ENCODE measurements at regions of chr1 and their contacts with region 1.

Region 1: DNA sequence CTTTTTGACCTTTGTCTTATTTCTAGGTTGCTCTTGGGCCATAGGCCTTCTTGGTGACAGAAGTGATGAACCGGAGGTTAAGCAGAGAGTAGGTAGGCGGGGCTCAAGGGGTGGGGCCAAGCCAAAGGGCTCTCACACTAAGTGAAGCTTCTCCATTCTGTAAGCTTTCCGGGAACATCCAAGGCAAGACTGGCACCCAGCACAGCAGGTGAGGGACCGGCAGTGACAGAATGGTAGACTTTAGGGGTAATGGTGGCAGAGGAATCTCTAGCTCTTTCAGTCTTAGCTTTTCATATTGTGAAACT is at the start of gene TNFAIP8L2:
- DNase-seq: peak; percentile 94
- H3K4me3 Mint-ChIP-seq: peak within 1 kb of the TSS; percentile 97
- H3K27ac Mint-ChIP-seq: peak within 1 kb of the TSS; percentile 96
- H3K4me1 Mint-ChIP-seq: peaks cover 42% of the 10 kb centered on the region
- H3K27me3 Mint-ChIP-seq: no peaks in the 10 kb centered on the region
- total RNA-seq, gene TNFAIP8L2: 29.4 and 32.5 TPM in 2 replicates

Region 2: GRCh38 chr1:151024540-151025146 is 131.8 kb before region 1 on chr1:
- intact Hi-C with region 1: loop called (anchors 1 kb)
- DNase-seq: peak; percentile 95
- H3K4me3 Mint-ChIP-seq: peak overlapping the region; percentile 30
- H3K27ac Mint-ChIP-seq: peak overlapping the region; percentile 59
- H3K4me1 Mint-ChIP-seq: peaks cover 7% of the 10 kb centered on the region
- H3K27me3 Mint-ChIP-seq: no peaks in the 10 kb centered on the region

Region 3: DNA sequence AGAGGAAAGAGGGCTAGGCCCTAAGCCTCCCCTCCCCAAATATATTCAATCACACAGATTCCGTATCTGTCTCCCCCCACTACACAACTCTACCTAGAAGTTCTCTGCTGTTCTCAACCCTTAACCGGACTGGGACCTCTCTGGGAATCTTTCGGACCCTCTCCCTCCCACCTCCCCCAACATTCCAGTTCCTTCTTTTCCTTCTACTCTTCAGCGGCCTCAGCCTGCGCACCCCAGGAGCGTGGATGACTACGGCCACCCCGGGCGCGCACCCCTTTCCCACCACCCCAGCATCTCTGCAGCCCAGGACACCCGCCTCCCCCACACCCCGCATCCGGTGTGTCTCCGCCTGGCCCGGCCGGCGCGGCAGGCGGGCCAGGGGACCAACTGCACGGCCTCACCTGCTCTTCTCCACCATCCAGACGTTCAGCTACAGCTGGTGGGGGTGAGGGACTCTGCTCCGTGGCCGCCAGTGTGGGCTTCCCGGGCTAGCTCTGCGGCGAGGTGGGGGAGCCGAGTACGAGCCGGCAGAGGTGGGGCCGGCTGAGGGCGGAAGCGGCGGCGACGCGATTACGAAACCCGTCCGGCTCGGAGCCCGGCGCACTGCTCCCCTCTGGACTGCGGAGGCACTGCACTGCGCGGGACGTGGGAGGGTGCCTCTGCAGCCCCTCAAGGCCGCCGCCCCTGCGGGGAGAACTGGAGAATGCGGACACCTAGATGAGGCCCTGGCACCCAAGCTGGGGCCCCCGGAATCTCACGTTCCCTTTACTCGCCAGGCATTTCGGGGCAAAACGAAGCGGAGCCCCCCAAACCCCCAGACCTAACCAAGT is 97.2 kb before region 1 on chr1 and contains the start of gene CDC42SE1:
- intact Hi-C with region 1: loop called (anchors 5 kb)
- DNase-seq: peak; percentile 96
- H3K4me3 Mint-ChIP-seq: peak within 1 kb of the TSS; percentile 99
- H3K27ac Mint-ChIP-seq: peak within 1 kb of the TSS; percentile 99
- H3K4me1 Mint-ChIP-seq: peaks cover 63% of the 10 kb centered on the region
- H3K27me3 Mint-ChIP-seq: no peaks in the 10 kb centered on the region
- total RNA-seq, gene CDC42SE1: 189 and 190 TPM in 2 replicates

Region 4: DNA sequence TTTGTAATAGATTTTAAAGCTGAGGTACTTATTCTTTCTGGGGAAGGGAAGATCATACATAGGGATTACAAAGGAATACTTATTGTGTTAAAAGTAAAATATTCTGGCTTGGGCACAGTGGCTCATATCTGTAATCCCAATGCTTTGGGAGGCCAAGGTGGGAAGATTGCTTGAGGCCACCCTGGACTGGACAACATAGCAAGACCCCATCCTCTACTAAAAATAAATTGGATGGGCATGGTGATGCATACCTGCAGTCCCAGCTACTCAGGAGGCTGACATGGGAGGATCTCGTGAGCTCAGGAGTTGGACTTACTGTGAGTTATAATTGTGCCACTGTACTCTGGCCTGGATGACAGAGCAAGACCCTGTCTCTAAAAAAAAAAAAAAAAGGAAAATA is 58.3 kb before region 1 on chr1:
- intact Hi-C with region 1: loop called (anchors 1 kb)
- DNase-seq: no peak
- H3K4me3 Mint-ChIP-seq: no peak overlapping the region
- H3K27ac Mint-ChIP-seq: no peak overlapping the region
- H3K4me1 Mint-ChIP-seq: no peaks in the 10 kb centered on the region
- H3K27me3 Mint-ChIP-seq: no peaks in the 10 kb centered on the region

Region 5: GRCh38 chr1:151130987-151131586 is 25.4 kb before region 1 on chr1:
- intact Hi-C with region 1: loop called (anchors 2 kb)
- DNase-seq: peak; percentile 91
- H3K4me3 Mint-ChIP-seq: peak overlapping the region; percentile 70
- H3K27ac Mint-ChIP-seq: peak overlapping the region; percentile 49
- H3K4me1 Mint-ChIP-seq: peaks cover 6% of the 10 kb centered on the region
- H3K27me3 Mint-ChIP-seq: peaks cover 7% of the 10 kb centered on the region